BJ (cell line): ENCODE measurements at regions of chr6 and their contacts with region 1.

Region 1: DNA sequence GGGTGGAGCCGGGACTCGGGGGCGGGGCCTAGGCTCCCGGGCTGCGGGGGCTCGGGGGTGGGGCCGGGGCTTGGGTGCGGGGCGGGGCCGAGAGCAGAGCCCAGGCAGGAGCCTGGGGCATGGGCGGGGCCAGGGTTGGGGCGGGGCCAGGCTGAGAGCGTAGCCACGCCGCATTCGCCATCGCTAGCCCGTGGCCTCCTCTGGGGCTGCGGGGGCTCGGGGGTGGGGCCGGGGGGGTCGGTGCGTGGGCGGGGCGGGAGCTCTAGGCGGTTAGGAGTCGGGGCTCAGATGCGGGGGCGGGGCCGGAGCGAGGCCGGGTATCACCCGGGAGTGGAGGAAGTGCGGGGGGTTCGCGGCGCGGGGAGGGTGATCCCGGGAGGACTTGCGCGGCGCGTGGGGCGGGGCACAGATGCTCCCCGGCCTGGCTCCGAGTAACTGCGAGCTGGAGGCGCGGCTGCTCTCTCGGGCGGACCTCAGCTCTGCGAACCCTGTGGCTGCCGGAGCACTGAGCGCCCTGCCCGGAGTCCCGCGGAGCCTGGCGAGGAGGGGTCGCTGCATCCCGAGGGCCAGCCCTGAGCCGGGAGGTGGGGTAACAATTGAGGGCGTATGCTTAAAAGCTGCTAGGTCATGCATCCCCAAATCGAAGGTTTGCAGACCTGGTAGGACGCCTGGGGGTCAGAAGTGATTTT is 434 bp upstream of the ECI2 start:
- DNase-seq: peak; percentile 63
- H3K4me3 ChIP-seq: peak overlapping the region; percentile 57
- H3K27me3 ChIP-seq: no peaks in the 10 kb centered on the region
- CTCF ChIP-seq: no peak

Region 2: GRCh38 chr6:4155848-4156466 is 20.1 kb after region 1 on chr6:
- CTCF ChIA-PET with region 1: interaction called, 25 read pairs
- POLR2A ChIA-PET with region 1: no interaction called
- DNase-seq: no peak
- H3K4me3 ChIP-seq: no peak overlapping the region
- H3K27me3 ChIP-seq: peaks cover 2% of the 10 kb centered on the region
- CTCF ChIP-seq: peak; percentile 81